Left ventricle myocardium superior (tissue), 1 donor: ENCODE measurements at regions of chr21 and their contacts with region 1.

Region 1: DNA sequence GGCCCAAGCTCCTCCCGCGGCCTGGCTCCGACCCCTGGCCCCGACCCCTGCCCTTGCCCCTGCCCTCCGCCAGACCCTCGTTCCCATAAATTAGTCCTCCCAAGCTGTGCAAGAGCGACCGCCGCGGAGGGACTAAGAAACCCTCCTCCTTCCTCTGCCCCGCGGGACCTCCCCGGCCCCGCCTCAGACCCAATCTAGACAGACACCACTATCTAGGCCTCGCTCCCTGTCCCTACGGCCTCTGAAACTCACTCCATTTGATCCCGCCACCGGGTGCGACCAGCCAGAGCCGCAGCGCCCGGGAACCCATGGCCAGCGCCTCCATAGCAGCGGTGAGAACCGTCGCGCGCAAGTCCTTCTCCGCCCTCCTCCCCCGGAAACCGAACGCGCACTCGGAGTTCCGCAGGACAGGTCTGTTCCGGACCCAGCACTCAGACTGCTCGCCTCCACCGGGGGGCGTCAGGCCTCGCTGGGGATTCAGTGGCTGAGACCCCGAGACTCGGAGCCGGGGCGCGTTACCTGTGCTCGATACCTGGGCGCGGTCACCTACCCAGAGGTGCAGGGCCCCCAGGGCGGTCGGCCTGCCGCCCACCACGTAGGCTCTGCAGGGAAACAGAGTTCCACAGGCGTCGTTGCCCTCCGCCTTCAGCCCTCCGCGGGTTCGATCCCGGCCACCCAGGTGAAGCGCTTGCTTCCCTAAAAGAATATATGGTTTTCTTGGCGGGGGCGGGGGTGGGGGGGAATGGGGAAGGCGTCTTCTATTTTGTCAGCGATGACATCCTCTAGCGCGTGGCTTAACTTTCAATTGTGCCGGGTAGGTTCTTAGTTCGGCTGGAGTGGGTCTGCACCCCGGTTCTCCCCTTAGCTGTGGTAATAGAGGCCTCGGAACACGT is at the start of gene MRPL39:
- DNase-seq: peak; percentile 90
- ATAC-seq: peak; percentile 99
- total RNA-seq, gene MRPL39: 61.3 TPM

Region 2: GRCh38 chr21:25561668-25562641 is 45.4 kb before region 1 on chr21:
- intact Hi-C with region 1: no loop called
- DNase-seq: peak; percentile 62
- ATAC-seq: peak; percentile 82

Region 3: GRCh38 chr21:25708467-25709065 is 101.2 kb after region 1 on chr21:
- intact Hi-C with region 1: loop called (anchors 2 kb)
- DNase-seq: no peak
- ATAC-seq: no peak

Region 4: DNA sequence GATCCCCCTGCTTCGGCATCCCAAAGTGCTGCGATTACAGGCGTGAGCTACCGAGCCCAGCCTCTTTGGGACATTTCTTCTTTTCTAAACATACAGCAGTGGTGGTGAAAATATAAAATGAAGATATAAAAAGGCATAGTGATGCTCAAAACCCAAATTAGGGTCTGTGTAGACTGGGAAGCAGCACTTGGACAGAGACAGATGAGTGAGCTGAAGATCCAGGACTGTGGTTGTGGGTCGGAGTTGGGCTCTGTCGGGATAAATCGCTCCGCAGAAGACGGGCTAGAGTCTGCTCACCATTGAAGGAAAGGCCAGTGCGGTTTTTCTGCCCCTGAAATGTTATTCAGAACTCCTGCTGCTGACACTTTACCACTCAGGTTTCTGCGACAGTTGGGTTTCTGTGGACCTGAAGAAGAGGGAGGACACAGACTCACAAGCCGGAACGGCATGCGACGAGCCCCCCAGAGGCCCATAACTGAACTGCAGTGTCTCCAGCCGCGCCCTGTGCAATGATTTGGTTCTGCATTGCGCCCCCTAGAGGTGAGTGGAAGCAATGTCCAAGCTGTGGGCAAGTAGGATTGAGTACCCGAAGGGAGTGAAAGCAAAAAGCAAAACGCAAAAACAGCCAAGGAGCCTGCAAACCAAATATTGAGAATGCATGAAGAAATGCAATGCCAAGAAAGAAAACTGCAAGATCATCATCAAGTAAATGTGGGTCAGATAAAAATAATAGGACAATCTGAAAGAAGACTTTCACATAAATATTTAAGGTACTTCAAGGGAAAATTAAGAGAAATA is 194.0 kb after region 1 on chr21:
- intact Hi-C with region 1: loop called (anchors 5 kb)
- DNase-seq: peak; percentile 86
- ATAC-seq: peak; percentile 97